ENCODE measurements at regions of chr20 and their contacts with region 1.

Region 1: GRCh38 chr20:56032251-56032650 is 26.9 kb upstream of the CBLN4 start:
- DNase-seq: peak; percentile 2
- ATAC-seq: no peak
- H3K4me3 ChIP-seq: no peak overlapping the region
- H3K27ac ChIP-seq: no peak overlapping the region
- H3K4me1 ChIP-seq: no peaks in the 10 kb centered on the region
- H3K27me3 ChIP-seq: no peaks in the 10 kb centered on the region
- CTCF ChIP-seq: no peak
- POLR2A ChIP-seq: no peak
- RAD21 ChIP-seq: no peak

Region 2: GRCh38 chr20:56057132-56057531 is 24.9 kb after region 1 on chr20:
- CTCF ChIA-PET with region 1: no interaction called
- POLR2A ChIA-PET with region 1: no interaction called
- RAD21 ChIA-PET with region 1: no interaction called
- intact Hi-C with region 1: no loop called
- DNase-seq: no peak
- ATAC-seq: no peak
- H3K4me3 ChIP-seq: no peak overlapping the region
- H3K27ac ChIP-seq: no peak overlapping the region
- H3K4me1 ChIP-seq: no peaks in the 10 kb centered on the region
- H3K27me3 ChIP-seq: no peaks in the 10 kb centered on the region
- CTCF ChIP-seq: no peak
- POLR2A ChIP-seq: no peak
- RAD21 ChIP-seq: no peak

Region 3: GRCh38 chr20:56091629-56092314 is 59.5 kb after region 1 on chr20:
- CTCF ChIA-PET with region 1: no interaction called
- POLR2A ChIA-PET with region 1: no interaction called
- RAD21 ChIA-PET with region 1: no interaction called
- intact Hi-C with region 1: loop called (anchors 2 kb)
- DNase-seq: no peak
- ATAC-seq: no peak
- H3K4me3 ChIP-seq: no peak overlapping the region
- H3K27ac ChIP-seq: no peak overlapping the region
- H3K4me1 ChIP-seq: no peaks in the 10 kb centered on the region
- H3K27me3 ChIP-seq: no peaks in the 10 kb centered on the region
- CTCF ChIP-seq: no peak
- POLR2A ChIP-seq: no peak
- RAD21 ChIP-seq: no peak